MCF 10A (cell line): ENCODE measurements at regions of chr4 and their contacts with region 1.

Region 1: DNA sequence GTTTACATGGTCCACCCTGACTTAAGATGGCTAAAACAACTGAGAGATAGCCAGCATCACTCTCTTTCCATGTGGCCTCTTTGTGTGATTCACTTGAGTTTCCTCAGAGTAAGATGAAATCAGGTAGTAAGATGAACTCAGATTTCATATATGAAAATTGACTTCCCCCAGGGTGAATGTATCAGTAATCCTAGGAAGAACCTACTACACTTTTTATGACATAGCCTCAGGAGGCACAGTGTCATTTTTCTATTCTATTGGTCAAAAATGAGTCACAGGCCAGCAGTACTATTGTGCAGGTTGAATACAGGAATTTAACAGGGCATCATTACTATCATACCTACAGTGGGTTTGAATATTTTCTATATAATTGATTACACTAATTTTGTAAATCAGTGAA is 14.6 kb upstream of the SULT1E1 start:
- DNase-seq: peak; percentile 21
- H3K4me3 Mint-ChIP-seq: no peak overlapping the region
- H3K27ac Mint-ChIP-seq: no peak overlapping the region
- H3K4me1 Mint-ChIP-seq: no peaks in the 10 kb centered on the region
- H3K27me3 Mint-ChIP-seq: no peaks in the 10 kb centered on the region
- CTCF ChIP-seq: no peak

Region 2: DNA sequence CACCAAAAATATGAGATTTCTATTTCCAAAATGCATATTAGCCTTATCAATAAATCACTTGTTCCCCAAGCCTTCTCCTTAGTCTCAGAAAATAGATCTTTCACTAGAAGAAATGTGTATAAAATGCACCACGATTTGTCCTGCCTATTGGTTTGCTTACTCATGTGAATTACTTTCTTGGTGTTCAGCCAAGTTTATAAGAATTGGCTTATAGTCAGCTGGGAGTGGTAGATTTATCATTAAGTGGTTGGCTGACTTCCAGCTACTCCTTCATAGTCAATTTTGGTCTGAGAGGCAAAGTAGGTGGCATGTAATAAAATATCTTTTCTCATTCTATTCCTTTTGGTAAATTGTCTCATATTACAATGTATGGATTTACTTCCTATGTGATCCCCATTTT is 15.8 kb before region 1 on chr4:
- CTCF ChIA-PET with region 1: interaction called, 16 read pairs
- POLR2A ChIA-PET with region 1: interaction called, 10 read pairs
- intact Hi-C with region 1: no loop called
- DNase-seq: peak; percentile 81
- H3K4me3 Mint-ChIP-seq: no peak overlapping the region
- H3K27ac Mint-ChIP-seq: no peak overlapping the region
- H3K4me1 Mint-ChIP-seq: no peaks in the 10 kb centered on the region
- H3K27me3 Mint-ChIP-seq: no peaks in the 10 kb centered on the region
- CTCF ChIP-seq: no peak

Region 3: DNA sequence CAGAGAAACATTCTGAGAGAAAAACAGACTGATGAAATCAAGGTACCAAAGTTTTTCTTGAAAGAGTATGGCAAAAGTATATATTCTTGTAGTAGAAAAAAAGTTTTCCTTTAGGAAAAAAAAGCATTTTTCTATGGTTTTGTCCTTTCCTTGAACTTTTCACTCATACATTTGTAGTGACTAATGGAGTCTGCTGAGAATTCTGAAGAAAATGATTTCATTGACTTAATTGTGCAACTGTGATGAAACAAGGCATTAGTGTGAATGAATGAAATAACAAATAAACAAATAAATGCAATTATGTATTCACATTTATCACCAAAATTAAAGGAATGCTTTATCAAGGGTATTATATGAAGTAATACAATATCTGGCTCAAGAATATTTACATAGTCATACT is 62.0 kb after region 1 on chr4:
- CTCF ChIA-PET with region 1: no interaction called
- POLR2A ChIA-PET with region 1: no interaction called
- intact Hi-C with region 1: no loop called
- DNase-seq: peak; percentile 4
- H3K4me3 Mint-ChIP-seq: no peak overlapping the region
- H3K27ac Mint-ChIP-seq: no peak overlapping the region
- H3K4me1 Mint-ChIP-seq: no peaks in the 10 kb centered on the region
- H3K27me3 Mint-ChIP-seq: peaks cover 73% of the 10 kb centered on the region
- CTCF ChIP-seq: no peak